ENCODE measurements at regions of chr1 and their contacts with region 1.

Region 1: DNA sequence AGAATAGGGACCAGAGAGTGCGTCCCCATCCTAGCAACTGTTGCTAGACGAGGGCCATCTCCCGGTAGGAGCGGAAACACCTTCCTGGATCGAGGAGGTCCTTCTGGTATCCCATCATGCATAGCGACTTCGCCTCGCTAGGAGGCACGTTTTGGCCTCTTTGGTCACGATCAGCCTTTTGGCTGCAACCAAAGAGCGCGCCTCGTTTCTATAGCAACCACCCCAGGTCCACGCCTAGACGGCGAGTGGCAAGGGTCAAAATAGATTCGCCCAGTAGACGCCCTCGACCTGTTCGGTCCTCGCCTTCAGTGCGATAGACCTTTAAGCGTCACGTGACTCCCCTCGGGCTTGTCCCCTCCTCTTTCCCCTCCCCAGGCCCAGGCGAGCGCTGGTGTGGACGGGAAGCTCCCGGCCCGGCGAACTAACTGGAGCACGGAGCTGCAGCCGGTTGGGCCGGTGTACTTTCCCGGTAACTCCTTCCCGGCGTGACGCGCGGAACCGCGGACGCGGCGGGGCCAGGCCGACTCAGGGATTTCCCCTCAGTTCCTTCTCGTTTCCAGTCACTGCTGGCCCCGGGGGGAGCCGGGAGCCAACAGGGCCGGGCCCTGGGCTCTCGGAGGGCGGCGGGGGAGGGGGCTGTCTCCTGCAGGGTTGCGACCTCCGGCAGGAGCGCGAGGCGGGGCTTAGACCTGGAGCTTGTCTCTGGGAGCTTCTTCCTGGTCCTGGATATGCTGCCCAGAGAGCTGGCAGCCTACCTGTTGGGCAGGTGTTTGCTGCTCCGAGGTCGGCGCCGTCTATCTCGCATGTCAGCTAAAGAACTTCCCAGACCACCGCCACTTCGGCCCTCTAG is at the start of gene DNAJC16:
- DNase-seq: peak; percentile 100
- H3K4me3 ChIP-seq: peak within 1 kb of the TSS; percentile 93 to 99 (median 98)
- H3K27ac ChIP-seq: peak within 1 kb of the TSS; percentile 97 to 100 (median 98)
- H3K4me1 ChIP-seq: peaks cover 0 to 41% (median 33%) of the 10 kb centered on the region in 4 donors
- H3K27me3 ChIP-seq: no peaks in the 10 kb centered on the region
- CTCF ChIP-seq: peak in 1 of 4 experiments; percentile 16
- EP300 ChIP-seq: peak in 2 of 4 donors; percentile 18 to 98
- POLR2A ChIP-seq: peak; percentile 67 to 74
- total RNA-seq, gene DNAJC16: 11.4 to 20.5 (median 16.8) TPM

Region 2: GRCh38 chr1:15409388-15410222 is 117.1 kb before region 1 on chr1 and contains the start of gene EFHD2:
- intact Hi-C with region 1: loop called (anchors 5 kb)
- DNase-seq: peak; percentile 92
- H3K4me3 ChIP-seq: peak within 1 kb of the TSS; percentile 73 to 97 (median 92)
- H3K27ac ChIP-seq: peak within 1 kb of the TSS; percentile 79 to 88 (median 82)
- H3K4me1 ChIP-seq: peaks cover 0 to 61% (median 50%) of the 10 kb centered on the region in 4 donors
- H3K27me3 ChIP-seq: no peaks in the 10 kb centered on the region
- CTCF ChIP-seq: no peak
- EP300 ChIP-seq: no peak
- POLR2A ChIP-seq: no peak
- total RNA-seq, gene EFHD2: 32.7 to 47.4 (median 37.3) TPM

Region 3: DNA sequence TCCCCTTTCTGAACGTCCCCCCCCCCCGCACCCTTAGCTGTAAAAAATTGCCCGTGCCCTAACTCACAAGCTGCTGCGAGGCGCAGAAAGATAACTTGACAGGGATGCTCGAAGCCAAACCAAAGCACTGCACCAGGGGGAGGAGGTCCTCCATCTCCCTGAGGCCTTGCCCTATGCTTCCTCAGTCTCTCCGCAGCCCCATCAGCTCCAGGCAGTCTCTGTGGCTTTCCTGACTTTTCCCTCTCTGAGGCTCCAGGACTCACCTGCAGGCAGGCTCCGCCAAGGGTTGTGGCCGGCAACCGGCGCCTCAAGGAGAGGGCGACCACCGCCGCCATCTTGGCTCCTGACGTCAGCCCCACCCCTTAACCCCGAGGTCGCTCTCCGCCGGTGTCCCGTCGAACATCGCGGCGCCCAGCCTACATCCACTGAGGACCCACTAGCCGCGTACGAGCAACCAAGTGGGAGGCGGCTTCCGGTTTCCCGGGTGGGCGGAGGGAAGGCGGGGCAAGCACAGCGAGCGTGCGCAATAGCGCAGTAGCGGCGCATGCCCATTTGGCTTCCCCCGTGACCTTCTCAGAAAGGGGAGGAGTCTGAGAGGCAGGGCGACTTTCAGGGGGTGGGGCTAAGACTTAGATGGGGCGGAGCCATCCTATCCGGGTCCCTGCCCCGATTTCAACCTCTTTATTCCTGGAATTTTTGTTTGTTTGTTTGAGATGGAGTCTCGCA is 1527.1 kb after region 1 on chr1 and contains the start of gene SDHB:
- intact Hi-C with region 1: loop called (anchors 10 kb)
- DNase-seq: peak; percentile 100
- H3K4me3 ChIP-seq: peak within 1 kb of the TSS; percentile 67 to 90 (median 86)
- H3K27ac ChIP-seq: peak within 1 kb of the TSS; percentile 89 to 98 (median 94)
- H3K4me1 ChIP-seq: peaks cover 0 to 30% (median 16%) of the 10 kb centered on the region in 4 donors
- H3K27me3 ChIP-seq: no peaks in the 10 kb centered on the region
- CTCF ChIP-seq: no peak
- EP300 ChIP-seq: peak in 1 of 4 donors; percentile 71
- POLR2A ChIP-seq: peak; percentile 94
- total RNA-seq, gene SDHB: 109 to 228 (median 141) TPM

Measured in sigmoid colon (tissue), 7 donors.